CD4-positive, alpha-beta T cell (primary cell): ENCODE measurements at regions of chr2 and their contacts with region 1.

Region 1: DNA sequence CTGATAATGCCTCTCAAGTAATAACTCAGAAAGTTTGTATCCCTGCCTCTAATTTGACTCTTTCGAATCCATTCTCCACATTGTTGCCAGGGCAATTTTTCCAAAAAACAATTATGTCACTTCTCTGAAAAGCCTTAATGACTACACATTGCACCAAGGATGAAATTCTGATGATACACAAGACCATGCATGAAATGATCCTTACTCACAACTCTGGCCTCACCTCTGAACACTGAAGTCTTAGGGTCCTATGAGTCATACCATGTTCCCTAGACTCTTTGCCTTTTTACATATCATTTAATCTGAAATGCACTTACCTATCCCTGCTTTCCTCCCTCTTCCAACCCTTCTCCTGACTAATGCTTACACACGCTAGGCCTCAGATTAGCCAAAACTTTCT is 51.0 kb downstream of the WDPCP start:
- DNase-seq: no peak
- ATAC-seq: no peak
- H3K4me3 ChIP-seq: no peak overlapping the region
- H3K4me3 Mint-ChIP-seq: no peak overlapping the region
- H3K27ac ChIP-seq: no peak overlapping the region
- H3K27ac Mint-ChIP-seq: no peak overlapping the region
- H3K4me1 ChIP-seq: no peaks in the 10 kb centered on the region
- H3K4me1 Mint-ChIP-seq: no peaks in the 10 kb centered on the region
- H3K27me3 ChIP-seq: no peaks in the 10 kb centered on the region
- H3K27me3 Mint-ChIP-seq: no peaks in the 10 kb centered on the region
- CTCF ChIP-seq: no peak

Region 2: DNA sequence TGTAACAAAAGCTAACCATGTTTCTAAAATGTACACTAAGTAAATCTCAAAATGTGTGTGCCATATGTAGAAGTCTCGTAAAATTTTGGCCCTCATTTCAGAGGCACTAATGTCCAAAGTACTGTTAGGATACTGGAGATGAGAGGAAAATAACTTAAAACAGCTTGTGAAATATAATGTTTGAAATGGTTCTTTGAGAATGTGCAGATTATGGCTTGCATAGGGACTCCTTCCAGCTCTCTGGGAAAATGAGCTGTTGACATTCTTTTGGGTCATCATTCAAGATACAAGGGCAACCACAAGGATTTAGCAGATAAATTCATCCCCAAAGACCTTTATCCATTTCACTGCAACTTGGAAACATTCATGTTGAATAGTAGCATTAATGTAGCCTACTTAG is 524.8 kb before region 1 on chr2:
- CTCF ChIA-PET with region 1: no interaction called
- POLR2A ChIA-PET with region 1: no interaction called
- intact Hi-C with region 1: loop called in 1 of 2 experiments (anchors 5 kb)
- DNase-seq: no peak
- ATAC-seq: no peak
- H3K4me3 ChIP-seq: no peak overlapping the region
- H3K4me3 Mint-ChIP-seq: no peak overlapping the region
- H3K27ac ChIP-seq: no peak overlapping the region
- H3K27ac Mint-ChIP-seq: no peak overlapping the region
- H3K4me1 ChIP-seq: no peaks in the 10 kb centered on the region
- H3K4me1 Mint-ChIP-seq: no peaks in the 10 kb centered on the region
- H3K27me3 ChIP-seq: no peaks in the 10 kb centered on the region
- H3K27me3 Mint-ChIP-seq: no peaks in the 10 kb centered on the region
- CTCF ChIP-seq: no peak